ENCODE measurements at regions of chr4 and their contacts with region 1.

Region 1: DNA sequence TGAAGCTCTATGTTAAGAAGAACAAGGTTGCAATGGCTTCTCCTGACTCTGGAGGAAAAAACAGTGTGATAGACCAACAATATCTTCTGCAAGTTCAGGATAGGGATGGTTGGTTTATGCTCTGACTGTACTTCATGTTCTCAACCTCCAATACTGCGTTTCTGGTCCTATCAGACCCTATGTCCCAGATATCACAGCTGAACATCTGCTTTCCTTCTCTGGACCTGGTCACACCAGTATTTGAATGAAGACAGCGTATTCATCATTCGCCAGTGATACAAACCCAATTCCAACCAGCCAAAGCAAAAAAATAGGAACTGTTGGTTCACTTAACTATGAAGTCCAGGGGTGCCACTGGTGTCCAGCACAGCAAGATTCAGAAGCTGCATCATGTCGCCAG is 124.5 kb upstream of the KLF3 start:
- DNase-seq: no peak
- ATAC-seq: no peak

Region 2: DNA sequence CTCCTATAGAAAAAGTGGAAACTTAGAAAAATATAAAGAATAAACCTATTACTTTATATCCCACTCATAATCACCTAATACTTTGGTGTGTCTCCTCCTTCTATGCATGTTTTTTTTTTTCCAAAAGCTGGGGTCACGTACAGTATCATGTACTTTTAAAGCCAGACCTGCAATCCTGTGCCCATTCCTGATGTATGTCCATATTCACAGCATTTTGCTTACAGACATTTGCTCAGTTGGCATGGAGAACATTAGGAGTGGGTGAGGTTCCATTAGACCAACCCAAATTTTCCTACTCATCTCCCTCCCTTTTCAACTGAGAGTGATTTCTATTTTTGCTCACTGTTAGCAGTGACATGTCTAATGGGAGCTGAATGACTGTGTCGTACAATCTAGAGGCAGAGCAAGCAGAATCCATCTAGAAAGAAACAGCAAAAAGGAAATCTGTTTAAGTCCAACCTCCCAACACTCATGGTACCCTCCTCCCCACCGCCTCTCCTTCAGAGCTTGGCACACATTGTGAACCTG is 71.1 kb before region 1 on chr4:
- intact Hi-C with region 1: loop called in 1 of 2 experiments (anchors 2 kb)
- DNase-seq: no peak
- ATAC-seq: no peak